Esophagus muscularis mucosa (tissue), 4 donors: ENCODE measurements at regions of chrX and their contacts with region 1.

Region 1: DNA sequence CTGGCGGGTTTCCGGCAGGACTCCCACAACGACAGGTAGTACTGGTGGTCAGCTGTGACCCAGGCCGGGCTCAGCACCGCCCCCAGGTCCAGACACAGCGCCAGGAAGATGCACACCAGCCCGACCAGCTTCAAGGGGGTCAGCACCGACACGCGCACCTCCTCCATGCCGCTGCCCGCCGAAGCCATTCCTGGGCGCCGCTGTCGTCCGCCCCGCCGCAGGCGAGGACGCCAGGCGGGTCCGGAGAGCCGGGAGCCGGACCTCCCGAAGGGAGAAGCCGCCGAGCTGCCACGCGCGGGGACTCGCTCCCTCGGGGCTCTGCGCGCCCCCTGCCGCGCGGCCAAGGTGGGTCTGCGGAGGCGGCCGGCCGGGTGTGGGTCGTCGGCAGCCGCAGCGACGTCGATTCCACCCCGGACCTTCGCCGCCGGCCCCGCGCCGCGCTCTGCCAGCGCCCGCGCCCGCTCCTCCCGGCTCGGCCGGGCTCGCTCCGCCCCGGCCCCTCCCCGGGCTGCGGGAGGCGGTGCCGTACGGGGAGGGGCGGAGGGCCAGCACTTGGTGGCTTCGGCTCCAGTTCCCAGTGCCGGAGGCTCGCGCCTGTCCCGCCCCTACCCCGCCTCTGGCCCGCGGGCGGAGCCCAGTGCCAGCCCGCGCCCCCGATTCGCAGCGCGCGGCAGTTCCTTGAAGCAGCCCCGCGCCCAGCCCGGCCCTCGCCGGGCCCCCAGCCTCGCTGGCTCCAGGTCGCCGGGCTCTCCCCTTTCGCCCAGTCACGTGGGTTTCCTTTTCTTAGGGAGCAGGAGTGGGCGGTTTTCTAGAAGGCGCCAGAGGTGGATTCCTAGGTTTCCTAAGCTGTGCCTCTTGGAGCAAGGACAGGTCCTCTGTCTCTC is at the start of gene TMEM47:
- DNase-seq: no peak
- H3K4me3 ChIP-seq: peak within 1 kb of the TSS; percentile 69 to 84 (median 70)
- H3K27ac ChIP-seq: peak within 1 kb of the TSS; percentile 85 to 90 (median 88)
- H3K4me1 ChIP-seq: peaks cover 0 to 14% (median 5%) of the 10 kb centered on the region in 4 donors
- H3K27me3 ChIP-seq: no peaks in the 10 kb centered on the region
- CTCF ChIP-seq: no peak
- EP300 ChIP-seq: no peak
- POLR2A ChIP-seq: no peak
- total RNA-seq, gene TMEM47: 124 to 261 (median 192) TPM

Region 2: GRCh38 chrX:34576864-34577263 is 80.2 kb before region 1 on chrX:
- intact Hi-C with region 1: no loop called
- DNase-seq: no peak
- H3K4me3 ChIP-seq: no peak overlapping the region
- H3K27ac ChIP-seq: no peak overlapping the region
- H3K4me1 ChIP-seq: no peaks in the 10 kb centered on the region
- H3K27me3 ChIP-seq: no peaks in the 10 kb centered on the region
- CTCF ChIP-seq: no peak
- EP300 ChIP-seq: no peak
- POLR2A ChIP-seq: no peak

Region 3: DNA sequence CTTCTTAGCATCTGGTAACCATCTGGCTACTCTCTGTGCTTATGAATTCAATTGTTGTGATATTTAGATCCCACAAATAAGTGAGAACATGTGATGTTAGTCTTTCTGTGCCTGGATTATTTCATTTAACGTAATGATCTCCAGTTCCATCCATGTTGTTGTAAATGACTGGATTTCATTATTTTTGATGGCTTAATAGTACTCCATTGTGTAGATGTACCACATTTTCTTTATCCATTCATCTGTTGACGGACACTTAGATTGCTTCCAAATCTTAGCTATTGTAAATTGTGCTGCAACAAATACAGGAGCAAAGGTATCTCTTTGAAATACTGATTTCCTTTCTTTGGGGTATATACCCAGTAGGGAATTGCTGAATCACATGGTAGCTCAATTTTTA is 30.0 kb after region 1 on chrX:
- intact Hi-C with region 1: no loop called
- DNase-seq: no peak
- H3K4me3 ChIP-seq: no peak overlapping the region
- H3K27ac ChIP-seq: no peak overlapping the region
- H3K4me1 ChIP-seq: no peaks in the 10 kb centered on the region
- H3K27me3 ChIP-seq: no peaks in the 10 kb centered on the region
- CTCF ChIP-seq: no peak
- EP300 ChIP-seq: no peak
- POLR2A ChIP-seq: no peak

Region 4: DNA sequence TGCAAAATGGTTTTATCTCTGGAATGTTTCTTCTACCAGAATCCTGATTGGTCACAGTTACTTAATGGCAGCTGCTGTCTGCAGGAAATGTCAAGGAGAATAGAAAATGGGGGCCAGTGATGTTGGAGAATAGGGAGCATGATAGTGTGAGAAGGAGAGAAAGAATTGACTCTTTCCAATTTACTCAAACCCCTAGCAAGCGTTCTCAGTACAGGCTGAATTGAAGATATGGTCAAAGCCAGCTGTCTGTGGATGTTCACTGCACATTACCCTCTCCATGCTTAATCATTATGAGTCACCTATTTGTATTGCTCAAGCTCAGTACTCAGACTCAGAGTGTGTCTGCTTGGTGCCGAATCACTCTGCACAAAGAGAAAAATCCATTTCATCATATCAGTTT is 227.7 kb after region 1 on chrX:
- intact Hi-C with region 1: loop called (anchors 10 kb)
- DNase-seq: no peak
- H3K4me3 ChIP-seq: no peak overlapping the region
- H3K27ac ChIP-seq: no peak overlapping the region
- H3K4me1 ChIP-seq: peaks cover 0 to 13% (median 0%) of the 10 kb centered on the region in 4 donors
- H3K27me3 ChIP-seq: no peaks in the 10 kb centered on the region
- CTCF ChIP-seq: no peak
- EP300 ChIP-seq: no peak
- POLR2A ChIP-seq: no peak